ENCODE measurements at regions of chr11 and their contacts with region 1.

Region 1: GRCh38 chr11:93849751-93850593 is 446 bp downstream of the VSTM5 start:
- DNase-seq: peak; percentile 30
- ATAC-seq: peak; percentile 75
- H3K4me3 ChIP-seq: peak overlapping the region; percentile 81
- H3K27ac ChIP-seq: peak overlapping the region; percentile 88
- H3K4me1 ChIP-seq: peaks cover 38% of the 10 kb centered on the region
- H3K27me3 ChIP-seq: no peaks in the 10 kb centered on the region
- CTCF ChIP-seq: peak; percentile 38; the same call in 1 of the 2 replicates

Region 2: GRCh38 chr11:93741094-93741881 is 108.7 kb before region 1 on chr11 and contains the starts of genes C11orf54 and TAF1D:
- CTCF ChIA-PET with region 1: interaction called, 4 read pairs
- POLR2A ChIA-PET with region 1: interaction called, 17 read pairs
- intact Hi-C with region 1: loop called (anchors 2 kb)
- DNase-seq: peak; percentile 99
- ATAC-seq: peak; percentile 87
- H3K4me3 ChIP-seq: peak within 1 kb of the TSS; percentile 96
- H3K27ac ChIP-seq: peak within 1 kb of the TSS; percentile 75
- H3K4me1 ChIP-seq: peaks cover 30% of the 10 kb centered on the region
- H3K27me3 ChIP-seq: no peaks in the 10 kb centered on the region
- CTCF ChIP-seq: no peak
- total RNA-seq, gene C11orf54: 24.3 and 32.4 TPM in 2 replicates
- total RNA-seq, gene TAF1D: 117 and 135 TPM in 2 replicates

Region 3: DNA sequence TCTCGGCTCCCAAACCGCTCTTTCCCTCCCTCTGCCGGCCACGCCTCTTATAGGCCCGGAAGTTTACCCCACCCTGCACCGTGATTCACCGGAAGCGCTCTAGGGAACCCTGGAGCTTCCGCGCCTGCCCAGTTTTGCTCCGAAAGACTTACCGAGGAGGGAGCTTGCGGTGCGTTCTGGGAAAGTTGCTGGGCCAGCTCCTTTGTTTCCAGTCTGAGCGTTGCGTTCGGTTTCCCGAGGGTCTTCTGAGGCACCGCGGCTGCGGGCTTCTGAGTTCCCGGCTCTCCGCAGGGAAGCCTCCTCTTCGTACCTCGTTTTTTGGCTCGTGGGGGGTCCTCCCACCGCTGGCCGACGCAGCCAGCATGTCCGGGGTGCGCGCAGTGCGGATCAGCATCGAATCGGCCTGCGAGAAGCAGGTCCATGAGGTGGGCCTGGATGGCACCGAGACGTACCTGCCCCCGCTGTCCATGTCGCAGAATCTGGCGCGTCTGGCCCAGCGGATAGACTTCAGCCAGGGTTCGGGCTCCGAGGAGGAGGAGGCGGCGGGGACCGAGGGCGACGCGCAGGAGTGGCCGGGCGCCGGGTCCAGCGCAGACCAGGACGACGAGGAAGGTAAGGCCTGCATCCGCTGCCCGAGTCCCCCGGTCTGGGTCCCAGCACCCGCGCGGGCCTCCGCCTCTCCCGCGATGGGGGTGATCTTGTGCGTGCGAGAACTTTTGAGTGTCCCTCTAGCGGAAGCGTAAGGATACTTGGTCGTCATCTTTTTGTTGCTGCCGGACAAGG is 65.6 kb before region 1 on chr11 and contains the start of gene MED17:
- CTCF ChIA-PET with region 1: interaction called, 3 read pairs
- POLR2A ChIA-PET with region 1: interaction called, 8 read pairs
- intact Hi-C with region 1: loop called (anchors 2 kb)
- DNase-seq: peak; percentile 98
- ATAC-seq: peak; percentile 93
- H3K4me3 ChIP-seq: peak within 1 kb of the TSS; percentile 92
- H3K27ac ChIP-seq: peak within 1 kb of the TSS; percentile 74
- H3K4me1 ChIP-seq: peaks cover 23% of the 10 kb centered on the region
- H3K27me3 ChIP-seq: no peaks in the 10 kb centered on the region
- CTCF ChIP-seq: peak; percentile 59
- total RNA-seq, gene MED17: 50.6 and 58.5 TPM in 2 replicates

Region 4: DNA sequence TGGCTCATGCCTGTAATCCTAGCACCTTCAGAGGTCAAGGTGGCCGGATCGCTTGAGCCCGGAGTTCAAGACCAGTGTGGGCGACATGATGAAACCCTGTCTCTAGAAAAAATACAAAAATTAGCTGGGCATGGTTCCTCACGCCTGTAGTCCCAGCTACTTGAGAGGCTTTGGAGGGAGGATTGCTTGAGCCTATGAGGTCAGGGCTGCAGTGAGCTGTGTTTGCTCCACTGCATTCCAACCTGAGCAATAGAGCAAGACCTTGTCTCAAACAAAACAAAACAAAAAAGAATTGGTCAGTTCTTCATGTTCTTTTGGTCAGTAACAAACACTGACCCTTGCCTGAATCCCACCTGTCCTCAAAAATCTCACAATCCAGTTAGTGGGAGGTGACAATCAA is 37.1 kb after region 1 on chr11:
- CTCF ChIA-PET with region 1: no interaction called
- POLR2A ChIA-PET with region 1: interaction called, 15 read pairs
- intact Hi-C with region 1: no loop called
- DNase-seq: no peak
- ATAC-seq: no peak
- H3K4me3 ChIP-seq: no peak overlapping the region
- H3K27ac ChIP-seq: no peak overlapping the region
- H3K4me1 ChIP-seq: no peaks in the 10 kb centered on the region
- H3K27me3 ChIP-seq: no peaks in the 10 kb centered on the region
- CTCF ChIP-seq: no peak

Region 5: GRCh38 chr11:93933230-93933629 is 83.3 kb after region 1 on chr11:
- CTCF ChIA-PET with region 1: no interaction called
- POLR2A ChIA-PET with region 1: no interaction called
- intact Hi-C with region 1: no loop called
- DNase-seq: no peak
- ATAC-seq: no peak
- H3K4me3 ChIP-seq: no peak overlapping the region
- H3K27ac ChIP-seq: no peak overlapping the region
- H3K4me1 ChIP-seq: peaks cover 48% of the 10 kb centered on the region
- H3K27me3 ChIP-seq: no peaks in the 10 kb centered on the region
- CTCF ChIP-seq: no peak

Region 6: DNA sequence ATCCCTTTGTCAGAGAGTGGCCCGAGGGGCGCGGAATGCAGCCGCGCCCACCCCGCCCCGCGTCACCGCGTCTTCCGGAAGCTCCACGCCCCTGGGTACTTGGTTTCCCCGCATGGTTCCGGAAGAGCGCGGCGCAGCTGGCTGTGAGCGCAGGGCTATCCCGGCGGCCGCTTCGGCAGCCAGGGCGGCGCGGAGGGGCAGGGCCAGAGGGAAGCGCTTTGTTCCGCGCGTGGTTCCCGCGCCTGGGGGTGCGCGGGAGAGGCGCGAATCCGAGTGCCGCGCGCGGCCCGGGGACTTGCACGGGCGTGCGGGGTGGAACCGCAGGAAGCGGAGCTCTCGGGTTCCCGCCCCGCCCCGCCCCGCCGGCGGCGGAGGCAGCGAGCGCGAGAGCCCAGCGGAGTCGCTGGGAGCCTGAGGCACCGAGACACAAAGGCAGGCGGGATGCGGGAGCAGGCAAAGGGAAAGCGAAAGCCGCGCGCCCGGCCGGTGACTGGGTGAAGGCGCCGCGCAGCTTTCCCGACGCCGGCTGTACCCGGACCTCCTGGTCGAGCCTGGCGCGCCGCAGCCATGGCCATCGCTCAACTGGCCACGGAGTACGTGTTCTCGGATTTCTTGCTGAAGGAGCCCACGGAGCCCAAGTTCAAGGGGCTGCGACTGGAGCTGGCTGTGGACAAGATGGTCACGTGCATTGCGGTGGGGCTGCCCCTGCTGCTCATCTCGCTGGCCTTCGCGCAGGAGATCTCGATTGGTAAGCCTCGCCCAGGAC is 279.0 kb after region 1 on chr11 and contains the start of gene PANX1:
- CTCF ChIA-PET with region 1: no interaction called
- POLR2A ChIA-PET with region 1: interaction called, 11 read pairs
- intact Hi-C with region 1: no loop called
- DNase-seq: peak; percentile 94
- ATAC-seq: peak; percentile 79
- H3K4me3 ChIP-seq: peak within 1 kb of the TSS; percentile 94
- H3K27ac ChIP-seq: peak within 1 kb of the TSS; percentile 91
- H3K4me1 ChIP-seq: peaks cover 55% of the 10 kb centered on the region
- H3K27me3 ChIP-seq: no peaks in the 10 kb centered on the region
- CTCF ChIP-seq: no peak
- total RNA-seq, gene PANX1: 62.9 and 67.7 TPM in 2 replicates

Region 7: GRCh38 chr11:94588371-94588952 is 738.5 kb after region 1 on chr11:
- CTCF ChIA-PET with region 1: no interaction called
- POLR2A ChIA-PET with region 1: interaction called, 11 read pairs
- intact Hi-C with region 1: no loop called
- DNase-seq: no peak
- ATAC-seq: peak; percentile 20; the same call in 1 of the 2 replicates
- H3K4me3 ChIP-seq: no peak overlapping the region
- H3K27ac ChIP-seq: no peak overlapping the region
- H3K4me1 ChIP-seq: no peaks in the 10 kb centered on the region
- H3K27me3 ChIP-seq: peaks cover 23% of the 10 kb centered on the region; the same call in 1 of the 2 replicates
- CTCF ChIP-seq: no peak

Region 8: DNA sequence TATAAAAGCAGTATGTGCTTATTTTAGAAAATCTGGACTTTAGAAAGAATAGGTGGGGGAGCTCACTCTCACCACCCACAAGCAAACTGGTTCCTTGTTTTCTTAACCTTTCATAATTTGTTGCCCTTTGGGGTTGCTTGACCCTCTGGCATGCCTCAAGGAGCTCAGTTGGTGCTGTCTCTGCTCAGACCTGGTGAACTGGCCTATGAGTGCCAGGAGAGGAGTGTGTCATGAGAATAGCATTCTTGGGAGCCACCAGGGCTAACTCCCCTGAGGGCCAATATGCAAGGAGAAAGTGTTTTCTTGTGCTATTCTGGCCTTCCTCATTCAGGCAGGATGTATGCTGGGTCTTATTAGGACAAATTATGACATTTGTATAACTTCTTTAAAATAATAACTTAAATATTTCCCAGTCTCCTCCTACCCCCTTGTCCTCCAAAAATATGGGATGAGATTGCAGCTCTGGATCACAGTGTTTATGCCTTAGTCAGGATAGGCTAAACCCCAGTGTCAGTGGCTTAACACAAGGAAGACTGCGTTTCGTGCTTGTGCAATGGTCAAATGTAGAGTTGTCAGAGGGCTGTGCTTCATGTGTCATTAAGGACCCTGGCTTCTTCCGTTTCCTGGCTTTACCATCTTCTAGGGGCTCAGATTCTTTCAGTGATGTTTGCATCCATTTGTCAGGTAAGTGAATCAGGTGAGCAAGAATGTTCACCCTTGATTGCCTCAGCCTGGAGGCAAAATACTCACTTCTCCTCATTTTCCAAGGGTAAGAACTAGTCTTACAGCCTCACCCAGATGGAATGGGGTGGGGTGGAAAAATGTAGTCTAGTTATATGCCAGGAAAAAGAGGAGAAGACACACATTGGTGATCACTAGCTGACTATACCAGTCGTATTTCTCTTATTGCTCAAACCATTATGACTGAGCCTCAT is 897.4 kb after region 1 on chr11:
- CTCF ChIA-PET with region 1: no interaction called
- POLR2A ChIA-PET with region 1: interaction called, 24 read pairs
- intact Hi-C with region 1: no loop called
- DNase-seq: peak; percentile 99
- ATAC-seq: peak; percentile 44
- H3K4me3 ChIP-seq: no peak overlapping the region
- H3K27ac ChIP-seq: peak overlapping the region; percentile 94
- H3K4me1 ChIP-seq: peaks cover 71% of the 10 kb centered on the region
- H3K27me3 ChIP-seq: no peaks in the 10 kb centered on the region
- CTCF ChIP-seq: no peak

Measured in PC-3 (cell line).